CD4-positive, alpha-beta T cell (primary cell): ENCODE measurements at regions of chr17 and their contacts with region 1.

Region 1: GRCh38 chr17:42997984-42998938 is at the start of gene RPL27:
- DNase-seq: peak; percentile 95 to 100 (median 98)
- ATAC-seq: peak; percentile 95
- H3K4me3 ChIP-seq: peak within 1 kb of the TSS; percentile 91
- H3K4me3 Mint-ChIP-seq: peak within 1 kb of the TSS; percentile 96
- H3K27ac ChIP-seq: peak within 1 kb of the TSS; percentile 73 to 98
- H3K27ac Mint-ChIP-seq: peak within 1 kb of the TSS; percentile 95
- H3K4me1 ChIP-seq: peaks cover 28% of the 10 kb centered on the region
- H3K4me1 Mint-ChIP-seq: peaks cover 25% of the 10 kb centered on the region
- H3K27me3 ChIP-seq: no peaks in the 10 kb centered on the region
- H3K27me3 Mint-ChIP-seq: no peaks in the 10 kb centered on the region
- CTCF ChIP-seq: peak; percentile 85
- total RNA-seq, gene RPL27: 1,923 to 1,951 TPM

Region 2: GRCh38 chr17:42609182-42609813 is 389.0 kb before region 1 on chr17 and contains the starts of genes RETREG3 and TUBG1:
- CTCF ChIA-PET with region 1: interaction called, 4 read pairs
- POLR2A ChIA-PET with region 1: interaction called, 11 read pairs
- intact Hi-C with region 1: no loop called
- DNase-seq: peak; percentile 97 to 100 (median 99)
- ATAC-seq: peak; percentile 90
- H3K4me3 ChIP-seq: peak within 1 kb of the TSS; percentile 100
- H3K4me3 Mint-ChIP-seq: peak within 1 kb of the TSS; percentile 100
- H3K27ac ChIP-seq: peak within 1 kb of the TSS; percentile 92 to 96
- H3K27ac Mint-ChIP-seq: peak within 1 kb of the TSS; percentile 97
- H3K4me1 ChIP-seq: peaks cover 40% of the 10 kb centered on the region
- H3K4me1 Mint-ChIP-seq: peaks cover 51% of the 10 kb centered on the region
- H3K27me3 ChIP-seq: no peaks in the 10 kb centered on the region
- H3K27me3 Mint-ChIP-seq: no peaks in the 10 kb centered on the region
- CTCF ChIP-seq: no peak
- total RNA-seq, gene RETREG3: 46.7 to 48.7 TPM
- total RNA-seq, gene TUBG1: 7.3 to 8.5 TPM

Region 3: GRCh38 chr17:42953669-42954068 is 44.6 kb before region 1 on chr17:
- CTCF ChIA-PET with region 1: no interaction called
- POLR2A ChIA-PET with region 1: no interaction called
- intact Hi-C with region 1: no loop called
- DNase-seq: no peak
- ATAC-seq: no peak
- H3K4me3 ChIP-seq: no peak overlapping the region
- H3K4me3 Mint-ChIP-seq: no peak overlapping the region
- H3K27ac ChIP-seq: no peak overlapping the region
- H3K27ac Mint-ChIP-seq: no peak overlapping the region
- H3K4me1 ChIP-seq: no peaks in the 10 kb centered on the region
- H3K4me1 Mint-ChIP-seq: no peaks in the 10 kb centered on the region
- H3K27me3 ChIP-seq: no peaks in the 10 kb centered on the region
- H3K27me3 Mint-ChIP-seq: no peaks in the 10 kb centered on the region
- CTCF ChIP-seq: no peak

Region 4: GRCh38 chr17:42964161-42964932 is 33.9 kb before region 1 on chr17 and contains the start of gene AARSD1:
- CTCF ChIA-PET with region 1: interaction called, 9 read pairs
- POLR2A ChIA-PET with region 1: interaction called, 10 read pairs
- intact Hi-C with region 1: loop called in 1 of 2 experiments (anchors 2 kb)
- DNase-seq: peak; percentile 82 to 96 (median 86)
- ATAC-seq: peak; percentile 98
- H3K4me3 ChIP-seq: peak within 1 kb of the TSS; percentile 73
- H3K4me3 Mint-ChIP-seq: peak within 1 kb of the TSS; percentile 86
- H3K27ac ChIP-seq: peak within 1 kb of the TSS; percentile 38 to 54
- H3K27ac Mint-ChIP-seq: peak within 1 kb of the TSS; percentile 79
- H3K4me1 ChIP-seq: peaks cover 20% of the 10 kb centered on the region
- H3K4me1 Mint-ChIP-seq: peaks cover 14% of the 10 kb centered on the region
- H3K27me3 ChIP-seq: no peaks in the 10 kb centered on the region
- H3K27me3 Mint-ChIP-seq: no peaks in the 10 kb centered on the region
- CTCF ChIP-seq: no peak
- total RNA-seq, gene AARSD1: 60.4 to 70.8 TPM

Region 5: DNA sequence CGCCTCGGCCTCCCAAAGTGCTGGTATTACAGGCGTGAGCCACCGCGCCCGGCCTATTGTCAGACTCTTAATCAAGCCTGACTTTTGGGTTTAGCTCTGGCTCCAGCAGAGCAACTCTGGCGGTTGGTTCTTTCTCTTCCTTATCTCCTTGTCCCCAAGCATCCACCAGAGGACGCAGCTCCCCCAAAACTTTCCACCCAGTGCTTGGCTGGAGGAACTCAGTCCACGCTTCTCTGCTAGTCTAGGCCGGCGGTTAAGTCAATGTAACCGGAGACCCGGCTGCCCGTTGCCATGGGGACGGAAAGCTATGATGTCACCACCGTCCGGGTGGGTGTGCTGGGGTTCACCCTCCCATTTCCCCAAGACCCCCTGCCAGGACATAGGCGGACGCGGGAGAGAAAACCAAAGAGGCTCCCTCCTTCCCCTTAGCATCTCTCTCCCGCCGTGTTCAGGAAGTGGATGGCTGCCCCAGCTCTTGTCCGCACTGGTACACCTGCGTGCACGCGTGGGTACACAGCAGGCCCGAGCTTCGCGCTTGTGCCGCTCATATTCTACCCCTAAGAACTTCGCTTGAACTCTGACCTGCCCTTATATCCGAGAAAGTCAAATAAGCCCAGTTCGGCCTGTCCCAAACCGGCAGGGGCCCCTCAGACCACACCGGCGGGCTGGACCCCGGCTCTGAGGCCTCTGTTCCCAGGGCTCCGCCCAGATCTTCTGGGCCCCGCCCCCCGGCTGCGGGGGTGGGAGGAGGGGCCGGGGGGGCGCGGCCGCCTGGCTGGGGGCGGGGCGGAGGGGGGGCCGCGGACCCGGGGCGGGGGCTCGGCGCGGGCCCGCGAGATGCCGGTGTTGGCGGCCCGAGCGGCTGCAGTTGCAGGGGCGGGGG is 26.4 kb after region 1 on chr17 and contains the start of gene RND2:
- CTCF ChIA-PET with region 1: interaction called, 10 read pairs
- POLR2A ChIA-PET with region 1: interaction called, 29 read pairs
- intact Hi-C with region 1: loop called in 1 of 2 experiments (anchors 1 kb)
- DNase-seq: peak; percentile 60 to 91 (median 71)
- ATAC-seq: peak; percentile 56
- H3K4me3 ChIP-seq: peak within 1 kb of the TSS; percentile 74
- H3K4me3 Mint-ChIP-seq: peak within 1 kb of the TSS; percentile 90
- H3K27ac ChIP-seq: peak within 1 kb of the TSS in 1 of 2 donors; percentile 56
- H3K27ac Mint-ChIP-seq: peak within 1 kb of the TSS; percentile 77
- H3K4me1 ChIP-seq: peaks cover 48% of the 10 kb centered on the region
- H3K4me1 Mint-ChIP-seq: peaks cover 28% of the 10 kb centered on the region
- H3K27me3 ChIP-seq: no peaks in the 10 kb centered on the region
- H3K27me3 Mint-ChIP-seq: no peaks in the 10 kb centered on the region
- CTCF ChIP-seq: peak; percentile 21
- total RNA-seq, gene RND2: 0.27 to 0.28 TPM

Region 6: GRCh38 chr17:43094129-43094835 is 96.0 kb after region 1 on chr17:
- CTCF ChIA-PET with region 1: no interaction called
- POLR2A ChIA-PET with region 1: no interaction called
- intact Hi-C with region 1: no loop called
- DNase-seq: no peak
- ATAC-seq: no peak
- H3K4me3 ChIP-seq: no peak overlapping the region
- H3K4me3 Mint-ChIP-seq: no peak overlapping the region
- H3K27ac ChIP-seq: no peak overlapping the region
- H3K27ac Mint-ChIP-seq: no peak overlapping the region
- H3K4me1 ChIP-seq: no peaks in the 10 kb centered on the region
- H3K4me1 Mint-ChIP-seq: no peaks in the 10 kb centered on the region
- H3K27me3 ChIP-seq: no peaks in the 10 kb centered on the region
- H3K27me3 Mint-ChIP-seq: no peaks in the 10 kb centered on the region
- CTCF ChIP-seq: no peak

Region 7: DNA sequence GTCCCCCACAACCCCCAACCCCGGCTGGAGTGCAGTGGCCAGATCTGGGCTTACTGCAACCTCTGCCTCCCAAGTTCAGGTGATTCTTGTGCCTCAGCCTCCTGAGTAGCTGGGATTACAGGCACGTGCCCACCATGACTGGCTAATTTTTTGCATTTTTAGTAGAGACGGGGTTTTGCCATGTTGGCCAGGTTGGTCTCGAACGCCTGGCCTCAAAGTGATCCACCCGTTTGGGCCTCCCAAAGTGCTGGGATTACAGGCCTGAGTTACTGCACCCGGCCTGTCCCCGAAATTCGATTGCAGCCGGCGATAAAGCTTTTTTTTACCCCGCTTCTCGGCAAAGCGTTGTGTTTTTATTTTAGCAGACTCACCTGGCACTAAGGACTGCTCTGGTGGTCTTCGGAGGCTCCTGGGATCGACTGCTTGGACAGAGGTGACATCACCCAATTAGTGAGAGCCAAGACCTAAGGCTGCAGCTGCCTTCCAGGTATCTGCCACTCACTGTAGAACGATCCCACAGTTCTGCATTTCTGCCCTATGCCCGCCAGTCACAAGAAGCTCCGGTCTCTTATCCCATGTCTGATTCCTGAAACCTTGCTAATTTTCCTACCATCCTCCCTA is 318.4 kb after region 1 on chr17:
- CTCF ChIA-PET with region 1: no interaction called
- POLR2A ChIA-PET with region 1: interaction called, 26 read pairs
- intact Hi-C with region 1: no loop called
- DNase-seq: peak in 3 of 14 experiments; percentile 23 to 66 (median 42)
- ATAC-seq: no peak
- H3K4me3 ChIP-seq: no peak overlapping the region
- H3K4me3 Mint-ChIP-seq: peak overlapping the region; percentile 20
- H3K27ac ChIP-seq: no peak overlapping the region
- H3K27ac Mint-ChIP-seq: no peak overlapping the region
- H3K4me1 ChIP-seq: no peaks in the 10 kb centered on the region
- H3K4me1 Mint-ChIP-seq: peaks cover 4% of the 10 kb centered on the region
- H3K27me3 ChIP-seq: no peaks in the 10 kb centered on the region
- H3K27me3 Mint-ChIP-seq: no peaks in the 10 kb centered on the region
- CTCF ChIP-seq: no peak

Region 8: GRCh38 chr17:43388359-43389045 is 390.2 kb after region 1 on chr17:
- CTCF ChIA-PET with region 1: no interaction called
- POLR2A ChIA-PET with region 1: interaction called, 22 read pairs
- intact Hi-C with region 1: no loop called
- DNase-seq: peak; percentile 84 to 95 (median 90)
- ATAC-seq: peak; percentile 70
- H3K4me3 ChIP-seq: peak overlapping the region; percentile 71
- H3K4me3 Mint-ChIP-seq: peak overlapping the region; percentile 93
- H3K27ac ChIP-seq: peak overlapping the region; percentile 94 to 97
- H3K27ac Mint-ChIP-seq: peak overlapping the region; percentile 97
- H3K4me1 ChIP-seq: peaks cover 27% of the 10 kb centered on the region
- H3K4me1 Mint-ChIP-seq: peaks cover 36% of the 10 kb centered on the region
- H3K27me3 ChIP-seq: no peaks in the 10 kb centered on the region
- H3K27me3 Mint-ChIP-seq: no peaks in the 10 kb centered on the region
- CTCF ChIP-seq: no peak